Heart left ventricle (tissue), 16 donors: ENCODE measurements at regions of chr6 and their contacts with region 1.

Region 1: DNA sequence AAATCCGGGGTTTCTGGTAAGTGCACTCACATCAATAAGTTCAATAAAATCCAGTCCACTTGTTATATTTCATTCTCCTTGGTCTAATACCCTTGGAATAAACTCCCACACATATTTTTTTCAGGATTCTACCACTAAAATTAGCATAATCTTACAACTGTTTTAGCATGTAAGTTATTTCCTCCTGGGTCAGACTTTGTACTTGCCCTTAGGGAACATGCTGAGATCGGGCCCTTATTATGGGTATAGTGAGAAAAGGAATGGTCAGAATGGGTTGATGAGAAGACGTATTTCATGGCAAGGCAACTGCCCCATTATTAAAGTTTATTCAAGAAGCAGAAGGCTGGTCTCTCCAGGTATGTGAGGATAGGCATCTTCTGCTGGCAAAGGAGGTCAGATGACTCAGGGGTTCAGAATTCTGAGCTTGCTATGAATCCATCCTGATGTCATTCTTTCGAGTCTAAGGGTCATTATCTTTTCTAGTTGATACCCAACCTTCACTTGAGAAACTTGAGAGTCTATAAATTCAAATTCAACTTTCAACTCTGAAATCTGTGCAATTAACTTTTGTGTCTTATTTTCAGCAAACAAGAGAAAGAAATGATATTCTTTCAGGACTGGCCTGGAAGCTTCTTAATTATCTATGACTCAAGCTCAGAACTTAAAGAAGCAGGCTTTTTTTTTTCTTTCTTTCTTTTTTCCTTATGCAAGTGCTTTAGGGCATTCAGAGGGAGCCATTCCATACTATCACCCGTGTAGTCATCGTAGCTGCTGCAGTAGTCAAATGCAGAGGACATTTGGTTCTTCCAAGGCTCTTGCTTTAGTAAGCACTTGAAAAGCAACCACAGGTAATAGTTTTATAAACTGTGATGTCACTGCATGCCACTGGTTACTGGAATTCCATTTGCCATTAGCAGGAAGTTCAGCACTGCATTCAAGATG is 93.2 kb downstream of the ADTRP start:
- DNase-seq: no peak
- ATAC-seq: no peak
- H3K4me3 ChIP-seq: no peak overlapping the region
- H3K27ac ChIP-seq: no peak overlapping the region
- H3K4me1 ChIP-seq: peaks cover 0 to 6% (median 0%) of the 10 kb centered on the region in 12 donors
- H3K27me3 ChIP-seq: no peaks in the 10 kb centered on the region
- CTCF ChIP-seq: no peak
- POLR2A ChIP-seq: no peak

Region 2: GRCh38 chr6:12081771-12082170 is 396.3 kb after region 1 on chr6:
- intact Hi-C with region 1: loop called in 4 of 10 experiments (anchors 10 kb)
- DNase-seq: no peak
- ATAC-seq: peak in 1 of 4 donors; percentile 42
- H3K4me3 ChIP-seq: no peak overlapping the region
- H3K27ac ChIP-seq: no peak overlapping the region
- H3K4me1 ChIP-seq: peaks cover 0 to 27% (median 10%) of the 10 kb centered on the region in 12 donors
- H3K27me3 ChIP-seq: no peaks in the 10 kb centered on the region
- CTCF ChIP-seq: no peak
- POLR2A ChIP-seq: no peak